ENCODE measurements at regions of chr5 and their contacts with region 1.

Region 1: GRCh38 chr5:30581198-30581935 is 612.1 kb upstream of the CDH6 start:
- DNase-seq: no peak
- ATAC-seq: no peak
- H3K4me3 ChIP-seq: no peak overlapping the region
- H3K27ac ChIP-seq: no peak overlapping the region
- H3K4me1 ChIP-seq: no peaks in the 10 kb centered on the region
- H3K27me3 ChIP-seq: no peaks in the 10 kb centered on the region
- CTCF ChIP-seq: no peak

Region 2: DNA sequence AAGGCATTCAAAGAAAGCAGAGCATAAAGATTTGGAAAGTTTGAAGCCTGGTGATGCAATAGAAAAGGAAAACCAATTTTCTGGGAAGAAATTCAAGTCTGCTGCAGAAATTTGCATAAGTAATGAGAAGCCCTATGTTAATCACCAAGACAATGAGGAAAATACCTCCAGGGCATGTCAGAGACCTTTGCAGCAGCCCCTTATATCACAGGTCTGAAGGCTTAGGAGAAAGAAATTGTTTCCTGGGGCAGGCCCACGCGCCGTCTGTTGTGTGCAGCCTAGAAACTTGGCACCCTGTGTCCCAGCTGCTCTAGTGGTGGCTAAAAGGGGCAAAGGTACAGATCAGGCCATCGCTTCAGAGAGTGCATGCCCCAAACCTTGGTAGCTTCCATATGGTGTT is 116.8 kb after region 1 on chr5:
- intact Hi-C with region 1: loop called in 1 of 10 experiments (anchors 5 kb)
- DNase-seq: no peak
- ATAC-seq: no peak
- H3K4me3 ChIP-seq: no peak overlapping the region
- H3K27ac ChIP-seq: no peak overlapping the region
- H3K4me1 ChIP-seq: no peaks in the 10 kb centered on the region
- H3K27me3 ChIP-seq: no peaks in the 10 kb centered on the region
- CTCF ChIP-seq: no peak

Region 3: GRCh38 chr5:30874241-30875034 is 293.1 kb after region 1 on chr5:
- intact Hi-C with region 1: no loop called
- DNase-seq: peak in 1 of 2 donors; percentile 5
- ATAC-seq: peak in 7 of 8 donors; percentile 71 to 92 (median 88)
- H3K4me3 ChIP-seq: no peak overlapping the region
- H3K27ac ChIP-seq: peak overlapping the region in 6 of 10 donors; percentile 35 to 59 (median 54)
- H3K4me1 ChIP-seq: peaks cover 0 to 14% (median 4%) of the 10 kb centered on the region in 9 donors
- H3K27me3 ChIP-seq: no peaks in the 10 kb centered on the region
- CTCF ChIP-seq: no peak